AG04449 (cell line): ENCODE measurements at regions of chr1 and their contacts with region 1.

Region 1: GRCh38 chr1:99526926-99527477 is 118.9 kb upstream of the PALMD start:
- DNase-seq: no peak
- H3K4me3 ChIP-seq: no peak overlapping the region
- CTCF ChIP-seq: peak; percentile 9

Region 2: GRCh38 chr1:99180343-99180808 is 346.6 kb before region 1 on chr1:
- CTCF ChIA-PET with region 1: interaction called, 21 read pairs
- POLR2A ChIA-PET with region 1: no interaction called
- DNase-seq: no peak
- H3K4me3 ChIP-seq: no peak overlapping the region
- CTCF ChIP-seq: peak; percentile 60

Region 3: GRCh38 chr1:99279525-99279924 is 247.5 kb before region 1 on chr1:
- CTCF ChIA-PET with region 1: no interaction called
- POLR2A ChIA-PET with region 1: no interaction called
- DNase-seq: no peak
- H3K4me3 ChIP-seq: no peak overlapping the region
- CTCF ChIP-seq: no peak

Region 4: DNA sequence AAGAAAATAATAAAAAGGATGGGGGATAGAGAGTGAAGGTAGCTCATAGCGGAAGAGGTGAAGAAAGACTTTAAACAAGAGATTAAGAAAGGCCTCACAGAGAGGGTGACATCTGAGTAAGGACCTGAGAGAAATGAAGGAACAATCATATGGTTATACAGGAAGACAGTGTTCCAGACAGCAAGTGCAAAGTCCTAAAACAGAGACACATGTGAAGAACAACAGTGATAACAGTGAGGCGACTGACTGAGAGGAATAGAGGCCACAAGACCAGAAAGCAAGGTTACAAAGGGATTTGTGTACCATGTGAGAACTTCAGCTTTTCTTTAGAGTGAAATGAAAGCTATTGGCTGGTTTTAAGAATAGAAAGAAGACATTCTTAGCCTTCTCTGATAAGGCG is 22.7 kb before region 1 on chr1:
- CTCF ChIA-PET with region 1: interaction called, 19 read pairs
- POLR2A ChIA-PET with region 1: no interaction called
- DNase-seq: no peak
- H3K4me3 ChIP-seq: no peak overlapping the region
- CTCF ChIP-seq: no peak

Region 5: DNA sequence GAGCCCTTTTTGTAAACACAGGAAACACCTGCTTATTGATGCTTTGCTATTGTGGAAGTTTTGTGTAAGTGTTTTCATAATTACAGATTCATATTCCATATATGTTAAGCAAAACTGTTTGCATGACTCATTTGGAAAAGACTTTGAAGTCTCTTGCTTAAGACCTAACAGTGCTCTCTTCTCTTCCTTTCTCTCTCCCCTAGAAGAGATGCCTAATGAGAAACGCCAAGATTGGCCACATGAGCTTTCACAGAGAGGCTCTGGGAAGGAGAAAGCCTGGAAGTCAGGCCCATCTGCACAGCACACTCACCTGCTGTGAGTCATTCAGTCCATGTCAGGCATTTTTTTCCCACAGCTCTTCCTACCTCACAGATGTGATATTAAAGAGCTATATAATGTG is 17.3 kb after region 1 on chr1:
- CTCF ChIA-PET with region 1: interaction called, 17 read pairs
- POLR2A ChIA-PET with region 1: no interaction called
- DNase-seq: no peak
- H3K4me3 ChIP-seq: no peak overlapping the region
- CTCF ChIP-seq: no peak

Region 6: DNA sequence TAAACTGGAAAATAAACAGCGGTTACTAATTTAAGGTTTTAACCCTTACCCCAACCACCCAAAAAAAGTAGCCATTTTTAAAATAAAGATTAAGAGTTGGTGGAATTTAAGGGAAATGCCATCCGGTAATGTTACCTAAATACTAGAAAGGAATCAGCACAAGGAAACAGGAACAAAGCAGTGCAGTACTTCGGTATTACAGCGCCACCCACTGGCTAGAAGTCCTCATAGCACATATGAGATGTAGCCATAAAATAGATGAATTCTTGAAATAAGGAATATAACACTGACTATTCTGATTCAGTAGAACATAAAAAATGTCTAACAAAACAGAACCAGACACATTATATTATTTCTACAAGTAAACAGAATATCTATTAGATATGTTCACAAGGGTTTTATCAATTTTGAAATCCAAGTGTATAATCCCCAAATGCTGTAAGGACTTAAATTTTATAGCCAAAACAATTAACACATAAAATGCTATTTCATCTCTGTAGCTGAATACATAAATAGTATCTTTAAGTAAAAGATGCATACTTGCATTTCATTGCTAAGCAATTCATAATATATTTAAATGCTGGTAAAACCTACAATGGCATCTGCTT is 180.6 kb after region 1 on chr1:
- CTCF ChIA-PET with region 1: interaction called, 13 read pairs
- POLR2A ChIA-PET with region 1: no interaction called
- DNase-seq: no peak
- H3K4me3 ChIP-seq: no peak overlapping the region
- CTCF ChIP-seq: peak; percentile 77